Activated CD4-positive, alpha-beta T cell treated with anti-CD3 and anti-CD28 coated beads for 36 hours (primary cell): ENCODE measurements at regions of chr1 and their contacts with region 1.

Region 1: GRCh38 chr1:212477014-212477679 is 44.4 kb downstream of the NENF start:
- DNase-seq: peak; percentile 87
- ATAC-seq: peak; percentile 93
- H3K4me3 Mint-ChIP-seq: no peak overlapping the region
- H3K27ac Mint-ChIP-seq: no peak overlapping the region
- H3K4me1 Mint-ChIP-seq: peaks cover 11% of the 10 kb centered on the region
- H3K27me3 Mint-ChIP-seq: peaks cover 2% of the 10 kb centered on the region

Region 2: DNA sequence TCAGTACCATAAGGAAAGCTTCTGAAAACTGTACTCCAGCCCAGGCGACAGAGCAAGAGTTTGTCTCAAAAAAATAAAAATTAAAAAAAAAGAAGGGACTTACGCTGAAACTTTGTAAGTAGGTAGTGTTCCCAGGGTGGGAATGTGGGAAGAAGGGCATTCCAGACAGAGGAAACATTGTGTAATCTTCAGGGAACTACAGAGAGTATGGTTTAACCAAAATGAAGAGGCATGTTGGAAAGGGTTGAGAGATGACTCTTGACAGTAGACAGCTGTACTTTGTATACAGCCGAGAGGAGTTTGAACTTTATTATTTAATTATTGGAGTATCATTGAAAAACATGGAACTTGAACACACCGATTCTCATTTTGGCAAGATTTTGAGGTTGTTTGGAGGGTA is 148.9 kb before region 1 on chr1:
- CTCF ChIA-PET with region 1: no interaction called
- POLR2A ChIA-PET with region 1: no interaction called
- intact Hi-C with region 1: no loop called
- DNase-seq: no peak
- ATAC-seq: no peak
- H3K4me3 Mint-ChIP-seq: no peak overlapping the region
- H3K27ac Mint-ChIP-seq: no peak overlapping the region
- H3K4me1 Mint-ChIP-seq: peaks cover 17% of the 10 kb centered on the region
- H3K27me3 Mint-ChIP-seq: no peaks in the 10 kb centered on the region

Region 3: GRCh38 chr1:212493551-212493950 is 16.4 kb after region 1 on chr1:
- CTCF ChIA-PET with region 1: interaction called, 13 read pairs
- POLR2A ChIA-PET with region 1: no interaction called
- intact Hi-C with region 1: no loop called
- DNase-seq: no peak
- ATAC-seq: no peak
- H3K4me3 Mint-ChIP-seq: no peak overlapping the region
- H3K27ac Mint-ChIP-seq: no peak overlapping the region
- H3K4me1 Mint-ChIP-seq: no peaks in the 10 kb centered on the region
- H3K27me3 Mint-ChIP-seq: no peaks in the 10 kb centered on the region

Region 4: DNA sequence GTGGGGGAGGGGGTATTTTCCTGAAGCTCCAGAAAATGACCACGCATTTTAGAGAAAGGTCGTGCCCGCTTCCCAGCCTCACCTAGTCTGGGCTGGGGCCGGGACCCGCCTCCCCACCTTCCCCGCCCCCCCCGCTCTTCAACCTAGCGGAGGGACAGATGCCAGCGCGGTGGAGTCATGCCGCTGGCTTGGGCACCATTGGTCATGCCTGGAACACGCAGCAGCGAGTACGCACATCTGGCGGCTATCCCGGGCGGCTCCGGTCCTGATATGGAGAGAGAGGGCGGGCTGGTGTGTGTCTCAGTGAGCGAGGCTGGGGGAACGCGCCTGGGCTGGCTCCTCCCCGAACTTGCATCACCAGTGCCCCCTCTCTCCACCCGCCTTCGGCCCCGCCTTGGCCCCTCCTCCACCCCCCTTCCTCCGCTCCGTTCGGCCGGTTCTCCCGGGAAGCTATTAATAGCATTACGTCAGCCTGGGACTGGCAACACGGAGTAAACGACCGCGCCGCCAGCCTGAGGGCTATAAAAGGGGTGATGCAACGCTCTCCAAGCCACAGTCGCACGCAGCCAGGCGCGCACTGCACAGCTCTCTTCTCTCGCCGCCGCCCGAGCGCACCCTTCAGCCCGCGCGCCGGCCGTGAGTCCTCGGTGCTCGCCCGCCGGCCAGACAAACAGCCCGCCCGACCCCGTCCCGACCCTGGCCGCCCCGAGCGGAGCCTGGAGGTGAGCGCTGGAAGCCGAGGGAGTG is 131.2 kb after region 1 on chr1 and contains the start of gene ATF3:
- CTCF ChIA-PET with region 1: interaction called, 7 read pairs
- POLR2A ChIA-PET with region 1: interaction called, 3 read pairs
- intact Hi-C with region 1: loop called (anchors 1 to 5 kb)
- DNase-seq: peak; percentile 97
- ATAC-seq: peak; percentile 89
- H3K4me3 Mint-ChIP-seq: peak within 1 kb of the TSS; percentile 91
- H3K27ac Mint-ChIP-seq: peak within 1 kb of the TSS; percentile 96
- H3K4me1 Mint-ChIP-seq: peaks cover 56% of the 10 kb centered on the region
- H3K27me3 Mint-ChIP-seq: peaks cover 45% of the 10 kb centered on the region
- total RNA-seq, gene ATF3: 40.3 to 44.9 TPM

Region 5: GRCh38 chr1:212630158-212630900 is 153.2 kb after region 1 on chr1:
- CTCF ChIA-PET with region 1: interaction called, 14 read pairs
- POLR2A ChIA-PET with region 1: no interaction called
- intact Hi-C with region 1: loop called (anchors 1 to 2 kb)
- DNase-seq: peak; percentile 80
- ATAC-seq: peak; percentile 97
- H3K4me3 Mint-ChIP-seq: no peak overlapping the region
- H3K27ac Mint-ChIP-seq: no peak overlapping the region
- H3K4me1 Mint-ChIP-seq: peaks cover 7% of the 10 kb centered on the region
- H3K27me3 Mint-ChIP-seq: peaks cover 3% of the 10 kb centered on the region

Region 6: DNA sequence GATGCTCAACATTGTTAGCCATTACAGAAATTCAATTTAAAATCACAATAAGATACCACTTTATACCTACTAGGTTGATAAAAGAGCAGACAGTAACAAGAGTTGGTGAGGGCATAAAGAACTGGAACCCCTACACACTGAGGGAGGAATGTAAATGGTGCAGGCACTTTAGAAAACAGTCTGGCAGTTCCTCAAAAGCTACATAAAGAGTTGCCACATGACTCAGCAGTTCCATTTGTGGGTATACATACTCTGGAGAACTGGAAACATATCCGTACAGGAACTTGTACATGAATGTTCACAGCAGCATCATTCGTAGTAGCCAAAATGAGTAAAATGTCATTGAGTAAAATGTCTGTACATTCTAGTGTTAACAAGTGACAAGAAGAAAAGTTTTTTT is 297.4 kb after region 1 on chr1:
- CTCF ChIA-PET with region 1: interaction called, 15 read pairs
- POLR2A ChIA-PET with region 1: no interaction called
- intact Hi-C with region 1: no loop called
- DNase-seq: no peak
- ATAC-seq: peak; percentile 17
- H3K4me3 Mint-ChIP-seq: no peak overlapping the region
- H3K27ac Mint-ChIP-seq: no peak overlapping the region
- H3K4me1 Mint-ChIP-seq: peaks cover 38% of the 10 kb centered on the region
- H3K27me3 Mint-ChIP-seq: no peaks in the 10 kb centered on the region

Region 7: GRCh38 chr1:212782422-212783154 is 305.4 kb after region 1 on chr1:
- CTCF ChIA-PET with region 1: interaction called, 24 read pairs
- POLR2A ChIA-PET with region 1: no interaction called
- intact Hi-C with region 1: loop called (anchors 1 kb)
- DNase-seq: no peak
- ATAC-seq: peak; percentile 73
- H3K4me3 Mint-ChIP-seq: no peak overlapping the region
- H3K27ac Mint-ChIP-seq: no peak overlapping the region
- H3K4me1 Mint-ChIP-seq: peaks cover 27% of the 10 kb centered on the region
- H3K27me3 Mint-ChIP-seq: no peaks in the 10 kb centered on the region

Region 8: DNA sequence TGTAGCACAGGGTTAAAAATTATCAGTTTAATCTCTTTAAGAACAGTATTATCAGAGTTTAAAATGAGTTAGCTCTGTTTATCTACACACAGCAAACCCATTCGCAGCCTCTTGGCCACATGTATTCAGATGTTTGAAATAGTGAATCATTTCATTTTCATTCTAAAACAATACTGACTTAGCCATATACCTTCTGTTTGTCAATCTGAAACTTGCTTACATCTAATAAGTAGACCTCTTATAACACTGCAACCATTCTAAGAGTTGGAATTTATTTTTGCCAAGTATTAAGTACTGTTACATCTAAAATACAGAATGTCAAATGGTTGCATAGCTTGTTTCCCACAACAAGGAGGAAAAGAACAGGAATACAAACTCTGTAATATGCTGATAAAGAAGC is 513.1 kb after region 1 on chr1:
- CTCF ChIA-PET with region 1: interaction called, 5 read pairs
- POLR2A ChIA-PET with region 1: no interaction called
- intact Hi-C with region 1: loop called in 1 of 2 experiments (anchors 1 kb)
- DNase-seq: no peak
- ATAC-seq: no peak
- H3K4me3 Mint-ChIP-seq: no peak overlapping the region
- H3K27ac Mint-ChIP-seq: no peak overlapping the region
- H3K4me1 Mint-ChIP-seq: peaks cover 8% of the 10 kb centered on the region
- H3K27me3 Mint-ChIP-seq: no peaks in the 10 kb centered on the region